Endothelial cell of umbilical vein (primary cell): ENCODE measurements at regions of chr17 and their contacts with region 1.

Region 1: DNA sequence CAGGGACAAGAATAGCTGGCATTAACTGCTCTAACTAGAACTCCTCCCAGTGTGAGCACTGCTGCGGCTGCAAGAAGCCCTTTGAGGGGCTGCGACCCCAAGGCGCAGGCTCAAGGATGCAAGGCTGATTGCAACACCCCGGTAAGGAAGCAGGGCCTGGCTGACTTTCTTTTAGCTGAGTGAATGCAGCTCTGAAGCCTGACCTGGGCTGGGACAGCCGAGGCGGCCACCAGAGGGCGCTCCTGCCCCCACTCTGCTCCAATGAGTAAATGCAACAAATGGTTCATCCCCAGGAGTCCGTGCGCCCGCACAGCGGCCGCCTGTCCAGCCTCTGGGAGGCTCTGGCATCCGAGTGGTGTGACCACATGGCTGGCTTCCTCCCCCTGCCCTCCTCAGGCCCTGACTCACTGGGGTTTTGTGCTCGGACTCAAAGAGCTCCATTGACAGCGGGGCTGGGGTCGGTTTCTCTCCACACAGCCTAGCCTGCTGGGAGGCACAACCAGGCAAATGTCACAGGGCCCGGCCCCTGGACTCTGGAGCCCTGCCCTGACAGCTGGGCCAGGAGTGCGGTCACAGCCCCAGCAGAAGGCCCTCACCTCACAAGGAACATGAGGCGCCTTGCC is at the start of gene SMIM5:
- DNase-seq: peak; percentile 71
- H3K4me3 ChIP-seq: no peak within 1 kb of the TSS
- H3K27ac ChIP-seq: peak within 1 kb of the TSS; percentile 29
- H3K4me1 ChIP-seq: peaks cover 12% of the 10 kb centered on the region
- H3K27me3 ChIP-seq: no peaks in the 10 kb centered on the region
- CTCF ChIP-seq: peak; percentile 92 to 97
- POLR2A ChIP-seq: no peak
- total RNA-seq, gene SMIM5: not detected in 2 replicates

Region 2: DNA sequence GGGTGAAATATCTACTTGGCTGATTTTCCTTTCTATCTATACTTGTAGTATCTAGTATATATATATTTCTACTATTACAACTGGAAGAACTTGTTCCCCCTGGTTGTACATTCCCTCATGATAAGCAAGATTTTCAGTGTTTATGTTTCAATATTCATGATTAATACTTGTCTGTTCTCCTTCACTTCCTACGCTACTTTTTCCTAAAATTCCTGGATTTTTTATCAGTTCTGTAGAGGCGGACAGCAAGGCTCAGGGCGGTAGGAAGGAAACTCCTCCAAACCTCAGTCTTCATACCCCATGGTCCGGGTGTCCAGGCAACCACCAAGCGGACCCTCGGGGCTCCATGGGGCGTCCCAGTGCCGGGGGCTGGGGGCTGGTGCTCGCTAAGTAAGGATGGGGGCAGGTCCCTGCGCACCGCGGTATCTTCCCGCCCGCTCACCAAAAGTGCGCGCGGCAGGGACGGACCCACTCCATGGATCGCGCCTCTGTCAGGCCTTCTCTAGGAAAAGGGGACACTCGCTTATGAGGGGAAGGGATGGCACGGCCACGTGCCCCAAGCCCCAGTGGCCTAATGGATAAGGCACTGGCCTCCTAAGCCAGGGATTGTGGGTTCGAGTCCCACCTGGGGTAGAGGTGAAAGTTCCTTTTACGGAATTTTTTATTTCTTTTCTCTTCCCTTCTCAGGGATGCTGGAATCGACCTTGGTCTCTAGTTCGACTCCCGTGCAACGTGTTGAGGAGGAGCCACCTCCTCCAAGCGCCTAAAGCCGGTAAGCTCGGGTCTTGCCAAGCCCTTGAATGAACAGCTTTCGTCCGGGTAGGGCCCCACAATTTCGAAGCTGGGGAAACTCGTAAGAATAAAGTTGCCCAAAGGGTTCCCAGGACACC is 599.4 kb before region 1 on chr17:
- CTCF ChIA-PET with region 1: no interaction called
- POLR2A ChIA-PET with region 1: no interaction called
- dilution Hi-C with region 1: no loop called
- intact Hi-C with region 1: no loop called
- DNase-seq: peak; percentile 93
- H3K4me3 ChIP-seq: peak overlapping the region; percentile 74 to 93 (median 87)
- H3K27ac ChIP-seq: peak overlapping the region; percentile 14
- H3K4me1 ChIP-seq: peaks cover 20% of the 10 kb centered on the region
- H3K27me3 ChIP-seq: peaks cover 0 to 2% of the 10 kb centered on the region in 2 experiments
- CTCF ChIP-seq: peak in 1 of 2 donors; percentile 18
- POLR2A ChIP-seq: no peak

Region 3: DNA sequence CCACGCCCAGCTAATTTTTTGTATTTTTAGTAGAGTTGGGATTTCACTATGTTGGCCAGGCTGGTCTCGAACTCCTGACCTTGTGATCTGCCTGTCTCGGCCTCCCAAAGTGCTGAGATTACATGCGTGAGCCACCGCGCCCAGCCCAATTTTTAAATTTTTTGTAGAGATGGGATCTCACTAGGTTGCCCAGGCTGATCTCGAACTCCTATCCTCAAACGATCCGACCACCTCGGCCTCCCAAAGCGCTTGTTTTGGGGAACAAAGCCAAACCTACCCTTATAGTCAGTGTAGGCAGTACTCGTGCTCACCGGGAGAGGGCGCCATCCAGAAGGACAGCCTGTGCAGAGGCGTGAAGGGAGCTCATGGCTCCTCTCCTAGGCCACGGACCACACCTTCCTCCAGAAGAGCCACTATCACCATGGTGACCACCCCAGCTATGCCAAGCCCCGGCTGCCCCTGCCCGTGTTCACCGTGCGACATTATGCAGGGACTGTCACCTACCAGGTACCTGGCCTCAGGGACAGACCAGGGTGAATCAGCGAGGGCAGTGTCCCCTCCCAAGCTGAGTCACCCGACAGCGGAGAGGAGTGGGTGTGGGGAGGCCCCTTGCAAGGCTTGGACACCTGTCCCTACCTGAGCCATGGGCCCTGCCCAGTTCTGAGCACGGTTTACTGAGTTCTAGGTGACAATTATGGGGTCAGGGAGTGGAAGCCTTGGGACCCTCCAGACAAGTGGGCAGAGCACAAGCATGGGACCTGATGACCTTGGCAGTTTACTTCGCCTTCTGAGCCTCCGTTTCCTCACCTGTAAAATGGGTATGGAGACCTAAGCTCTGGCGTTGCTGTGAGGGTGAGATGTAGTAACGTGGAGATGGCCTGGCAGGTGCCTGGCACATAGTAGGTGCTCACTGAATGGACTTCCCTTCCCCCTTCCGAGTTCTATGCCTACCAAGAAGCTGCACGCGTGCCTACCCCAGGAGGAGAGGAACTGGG is 31.6 kb before region 1 on chr17:
- CTCF ChIA-PET with region 1: interaction called, 36 read pairs
- POLR2A ChIA-PET with region 1: no interaction called
- dilution Hi-C with region 1: no loop called
- intact Hi-C with region 1: no loop called
- DNase-seq: peak; percentile 30
- H3K4me3 ChIP-seq: no peak overlapping the region
- H3K27ac ChIP-seq: no peak overlapping the region
- H3K4me1 ChIP-seq: no peaks in the 10 kb centered on the region
- H3K27me3 ChIP-seq: no peaks in the 10 kb centered on the region
- CTCF ChIP-seq: peak; percentile 61 to 81
- POLR2A ChIP-seq: no peak

Region 4: GRCh38 chr17:75652915-75653549 is 20.1 kb after region 1 on chr17:
- CTCF ChIA-PET with region 1: interaction called, 446 read pairs
- POLR2A ChIA-PET with region 1: interaction called, 5 read pairs
- dilution Hi-C with region 1: no loop called
- intact Hi-C with region 1: loop called (anchors 1 kb)
- DNase-seq: peak; percentile 56
- H3K4me3 ChIP-seq: no peak overlapping the region
- H3K27ac ChIP-seq: no peak overlapping the region
- H3K4me1 ChIP-seq: peaks cover 8% of the 10 kb centered on the region
- H3K27me3 ChIP-seq: no peaks in the 10 kb centered on the region
- CTCF ChIP-seq: peak; percentile 77 to 86
- POLR2A ChIP-seq: no peak

Region 5: DNA sequence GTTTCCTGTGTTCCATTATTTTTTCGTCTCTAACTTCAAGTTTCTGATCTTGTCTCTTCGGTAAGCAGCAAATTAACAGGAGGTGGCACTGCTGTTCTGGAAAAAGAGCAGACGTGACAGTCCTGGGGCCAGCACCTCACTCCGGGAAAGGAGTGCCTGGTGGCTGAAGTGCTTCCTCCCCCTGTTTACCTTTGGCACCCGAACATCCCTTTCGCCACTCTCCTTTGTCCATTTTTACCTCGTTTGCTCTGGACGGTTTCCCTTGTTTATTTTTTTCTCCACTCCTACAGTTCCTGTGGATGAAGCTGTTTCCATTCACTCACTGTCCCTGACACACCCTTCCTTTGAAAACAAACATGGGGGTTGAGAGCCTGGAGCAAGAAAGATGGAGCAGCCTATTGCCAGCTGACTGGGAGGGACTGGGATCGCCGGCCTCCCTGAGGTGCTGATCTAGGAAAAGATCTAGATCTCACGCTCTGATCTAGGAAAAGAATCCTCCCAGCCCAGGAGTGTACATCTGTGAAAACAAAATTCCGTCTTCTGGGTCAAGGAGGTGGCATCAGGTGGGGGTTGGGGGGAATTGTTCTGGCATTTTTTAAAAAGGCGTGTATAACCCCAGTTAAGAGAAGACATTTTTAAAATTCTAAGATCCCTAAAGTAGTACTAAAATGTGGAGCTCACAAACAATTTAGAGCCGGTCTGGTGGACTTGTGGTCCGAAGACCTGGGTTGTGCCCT is 46.9 kb after region 1 on chr17:
- CTCF ChIA-PET with region 1: interaction called, 41 read pairs
- POLR2A ChIA-PET with region 1: no interaction called
- dilution Hi-C with region 1: no loop called
- intact Hi-C with region 1: loop called (anchors 1 kb)
- DNase-seq: peak; percentile 89
- H3K4me3 ChIP-seq: no peak overlapping the region
- H3K27ac ChIP-seq: peak overlapping the region; percentile 42
- H3K4me1 ChIP-seq: peaks cover 46% of the 10 kb centered on the region
- H3K27me3 ChIP-seq: no peaks in the 10 kb centered on the region
- CTCF ChIP-seq: peak; percentile 33 to 39
- POLR2A ChIP-seq: no peak

Region 6: DNA sequence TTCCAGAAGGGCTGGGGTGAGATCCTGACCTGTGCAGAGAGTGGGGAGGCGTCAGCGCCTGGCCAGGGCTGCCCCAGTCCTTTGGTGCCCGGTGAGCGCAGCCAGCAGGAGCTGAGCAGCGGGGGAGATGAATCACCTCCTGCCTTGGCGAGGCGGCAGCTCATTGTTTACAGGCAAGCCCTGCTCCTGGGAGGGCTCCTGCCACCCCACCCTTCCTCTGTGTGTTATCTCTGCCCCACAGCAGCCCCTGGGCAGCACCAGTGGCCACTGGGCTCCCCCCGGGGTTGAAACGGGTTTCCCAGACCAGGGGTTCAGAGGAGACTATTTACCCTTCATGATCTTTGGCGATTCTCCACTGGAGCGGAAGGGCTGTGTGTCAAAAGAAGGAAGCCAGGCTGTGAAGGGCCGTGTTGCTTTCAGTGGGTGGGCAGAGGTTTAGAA is 74.2 kb after region 1 on chr17:
- CTCF ChIA-PET with region 1: interaction called, 11 read pairs
- POLR2A ChIA-PET with region 1: no interaction called
- dilution Hi-C with region 1: no loop called
- intact Hi-C with region 1: no loop called
- DNase-seq: peak; percentile 97
- H3K4me3 ChIP-seq: no peak overlapping the region
- H3K27ac ChIP-seq: peak overlapping the region; percentile 70
- H3K4me1 ChIP-seq: peaks cover 32% of the 10 kb centered on the region
- H3K27me3 ChIP-seq: no peaks in the 10 kb centered on the region
- CTCF ChIP-seq: no peak
- POLR2A ChIP-seq: peak; percentile 72

Region 7: DNA sequence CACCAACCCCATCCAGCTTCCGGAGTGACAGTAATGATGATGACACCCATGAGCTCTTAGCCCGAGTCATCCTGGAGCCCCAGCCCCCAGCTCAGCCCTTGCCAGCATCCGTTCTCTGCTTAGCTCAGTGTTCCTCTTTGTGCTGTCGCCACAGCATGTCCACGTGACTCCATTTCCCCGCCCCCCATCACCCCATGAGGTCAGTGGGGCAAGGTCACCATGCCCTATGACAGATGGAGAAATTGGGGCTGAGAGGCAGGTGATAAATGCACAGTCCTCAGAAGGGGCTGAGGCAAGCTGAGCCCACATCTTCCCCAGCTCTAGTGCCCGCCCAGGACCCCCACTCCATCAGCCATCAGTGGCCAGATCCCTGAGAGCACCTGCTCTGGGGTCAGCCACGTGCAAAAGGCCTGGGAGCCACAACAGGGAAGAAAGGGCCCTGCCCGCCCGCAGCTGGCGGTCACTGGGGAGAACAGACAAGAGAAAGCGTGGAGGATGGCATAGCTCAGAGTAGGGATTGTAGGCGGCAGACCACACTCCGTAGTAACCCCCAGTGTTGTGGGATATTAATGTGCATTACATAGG is 105.3 kb after region 1 on chr17:
- CTCF ChIA-PET with region 1: interaction called, 625 read pairs
- POLR2A ChIA-PET with region 1: no interaction called
- dilution Hi-C with region 1: no loop called
- intact Hi-C with region 1: no loop called
- DNase-seq: no peak
- H3K4me3 ChIP-seq: no peak overlapping the region
- H3K27ac ChIP-seq: no peak overlapping the region
- H3K4me1 ChIP-seq: no peaks in the 10 kb centered on the region
- H3K27me3 ChIP-seq: no peaks in the 10 kb centered on the region
- CTCF ChIP-seq: no peak
- POLR2A ChIP-seq: no peak